ENCODE measurements at regions of chr1 and their contacts with region 1.

Region 1: GRCh38 chr1:225480825-225481434 is 53.1 kb upstream of the LBR start:
- DNase-seq: peak; percentile 70
- ATAC-seq: peak; percentile 62
- H3K4me3 Mint-ChIP-seq: no peak overlapping the region
- H3K27ac Mint-ChIP-seq: no peak overlapping the region
- H3K4me1 Mint-ChIP-seq: peaks cover 28% of the 10 kb centered on the region
- H3K27me3 Mint-ChIP-seq: peaks cover 15% of the 10 kb centered on the region

Region 2: GRCh38 chr1:225498549-225499136 is 17.7 kb after region 1 on chr1:
- CTCF ChIA-PET with region 1: interaction called, 37 read pairs
- POLR2A ChIA-PET with region 1: no interaction called
- DNase-seq: no peak
- ATAC-seq: no peak
- H3K4me3 Mint-ChIP-seq: no peak overlapping the region
- H3K27ac Mint-ChIP-seq: no peak overlapping the region
- H3K4me1 Mint-ChIP-seq: no peaks in the 10 kb centered on the region
- H3K27me3 Mint-ChIP-seq: peaks cover 15% of the 10 kb centered on the region

Region 3: GRCh38 chr1:225508538-225509375 is 27.8 kb after region 1 on chr1:
- CTCF ChIA-PET with region 1: interaction called, 12 read pairs
- POLR2A ChIA-PET with region 1: no interaction called
- DNase-seq: no peak
- ATAC-seq: no peak
- H3K4me3 Mint-ChIP-seq: no peak overlapping the region
- H3K27ac Mint-ChIP-seq: no peak overlapping the region
- H3K4me1 Mint-ChIP-seq: no peaks in the 10 kb centered on the region
- H3K27me3 Mint-ChIP-seq: peaks cover 12% of the 10 kb centered on the region

Region 4: DNA sequence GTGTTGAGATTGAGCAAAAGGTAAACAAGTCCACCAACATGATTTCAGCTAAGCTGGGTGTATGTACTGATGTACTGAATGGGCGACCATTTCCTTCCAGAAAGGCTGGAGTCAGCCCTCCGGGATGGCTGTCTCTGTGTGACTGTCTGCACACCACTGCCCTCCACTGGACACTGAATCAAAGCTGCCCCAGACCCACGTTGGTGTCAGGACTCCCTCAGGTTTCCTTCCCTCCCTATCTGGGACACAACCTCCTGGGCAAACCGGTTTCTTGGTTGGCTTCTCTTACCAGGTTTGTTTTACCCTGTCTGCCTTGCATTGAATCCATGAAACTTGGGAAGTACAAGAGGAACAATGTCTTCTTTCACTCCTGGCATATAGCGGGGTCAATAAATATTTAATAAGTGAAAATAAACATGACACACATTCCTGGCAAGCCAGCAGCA is 291.4 kb after region 1 on chr1:
- CTCF ChIA-PET with region 1: interaction called, 43 read pairs
- POLR2A ChIA-PET with region 1: interaction called, 5 read pairs
- DNase-seq: peak; percentile 51
- ATAC-seq: no peak
- H3K4me3 Mint-ChIP-seq: no peak overlapping the region
- H3K27ac Mint-ChIP-seq: no peak overlapping the region
- H3K4me1 Mint-ChIP-seq: no peaks in the 10 kb centered on the region
- H3K27me3 Mint-ChIP-seq: no peaks in the 10 kb centered on the region

Measured in activated CD8-positive, alpha-beta T cell treated with anti-CD3 and anti-CD28 coated beads, Interleukin-2, amount 10 ng/mL, durations not matched to agents 7 days and 5 days (primary cell).